ENCODE measurements at regions of chr4 and their contacts with region 1.

Region 1: GRCh38 chr4:16082426-16083240 is 1.2 kb downstream of the PROM1 start:
- DNase-seq: peak; percentile 70 to 88
- H3K4me3 ChIP-seq: peak overlapping the region; percentile 62 to 94 (median 81)
- H3K27ac ChIP-seq: peak overlapping the region; percentile 48; the same call in 1 of the 2 replicates
- H3K4me1 ChIP-seq: peaks cover 0 to 9% (median 6%) of the 10 kb centered on the region in 4 experiments; a peak in 3 of 7 replicates
- H3K27me3 ChIP-seq: peaks cover 0 to 10% (median 5%) of the 10 kb centered on the region in 4 experiments; a peak in 5 of 7 replicates
- CTCF ChIP-seq: no peak
- EP300 ChIP-seq: peak in 1 of 2 experiments; percentile 11; a peak in 1 of 3 replicates
- POLR2A ChIP-seq: peak; percentile 65 to 92
- RAD21 ChIP-seq: peak in 1 of 2 experiments; percentile 14; a peak in 1 of 4 replicates

Region 2: GRCh38 chr4:16026160-16026761 is 56.4 kb before region 1 on chr4:
- CTCF ChIA-PET with region 1: interaction called, 5 read pairs
- POLR2A ChIA-PET with region 1: interaction called, 12 read pairs
- DNase-seq: no peak
- H3K4me3 ChIP-seq: no peak overlapping the region
- H3K27ac ChIP-seq: no peak overlapping the region
- H3K4me1 ChIP-seq: peaks cover 0 to 5% (median 3%) of the 10 kb centered on the region in 4 experiments; a peak in 4 of 7 replicates
- H3K27me3 ChIP-seq: no peaks in the 10 kb centered on the region
- CTCF ChIP-seq: peak in 2 of 3 experiments; percentile 70 to 71; a peak in 3 of 4 replicates
- EP300 ChIP-seq: no peak
- POLR2A ChIP-seq: no peak
- RAD21 ChIP-seq: peak; percentile 88 to 90

Region 3: GRCh38 chr4:16043642-16044498 is 38.8 kb before region 1 on chr4:
- CTCF ChIA-PET with region 1: interaction called, 3 read pairs
- POLR2A ChIA-PET with region 1: interaction called, 17 read pairs
- DNase-seq: no peak
- H3K4me3 ChIP-seq: no peak overlapping the region
- H3K27ac ChIP-seq: no peak overlapping the region
- H3K4me1 ChIP-seq: peaks cover 4 to 7% (median 4%) of the 10 kb centered on the region in 4 experiments; a peak in 5 of 7 replicates
- H3K27me3 ChIP-seq: no peaks in the 10 kb centered on the region
- CTCF ChIP-seq: no peak
- EP300 ChIP-seq: no peak
- POLR2A ChIP-seq: no peak
- RAD21 ChIP-seq: no peak

Region 4: GRCh38 chr4:16056681-16057385 is 25.8 kb before region 1 on chr4:
- CTCF ChIA-PET with region 1: interaction called, 4 read pairs
- POLR2A ChIA-PET with region 1: interaction called, 16 read pairs
- DNase-seq: no peak
- H3K4me3 ChIP-seq: no peak overlapping the region
- H3K27ac ChIP-seq: no peak overlapping the region
- H3K4me1 ChIP-seq: peaks cover 0 to 3% (median 2%) of the 10 kb centered on the region in 4 experiments; a peak in 2 of 7 replicates
- H3K27me3 ChIP-seq: no peaks in the 10 kb centered on the region
- CTCF ChIP-seq: no peak
- EP300 ChIP-seq: no peak
- POLR2A ChIP-seq: no peak
- RAD21 ChIP-seq: no peak

Region 5: DNA sequence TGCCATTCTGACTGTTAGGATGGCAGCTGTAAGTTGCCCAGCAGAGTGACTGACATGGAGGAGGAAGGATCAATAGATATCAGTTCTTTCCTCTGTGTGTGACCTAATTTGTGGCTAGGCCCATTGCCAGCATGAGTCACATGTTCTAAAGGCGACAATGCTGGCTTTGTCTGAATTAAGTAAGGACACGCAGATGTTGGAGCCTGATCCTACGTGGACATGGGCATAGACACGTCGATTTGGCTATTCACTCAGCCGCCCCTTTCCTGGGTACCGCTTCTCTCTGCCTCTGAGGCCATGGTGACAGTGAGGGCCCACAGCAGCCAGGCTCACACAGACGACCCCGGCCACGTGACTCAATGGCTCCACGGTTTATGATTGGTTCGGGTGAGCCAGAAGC is 15.1 kb before region 1 on chr4:
- CTCF ChIA-PET with region 1: interaction called, 7 read pairs
- POLR2A ChIA-PET with region 1: interaction called, 87 read pairs
- DNase-seq: no peak
- H3K4me3 ChIP-seq: no peak overlapping the region
- H3K27ac ChIP-seq: no peak overlapping the region
- H3K4me1 ChIP-seq: peaks cover 0 to 6% (median 2%) of the 10 kb centered on the region in 4 experiments; a peak in 4 of 7 replicates
- H3K27me3 ChIP-seq: no peaks in the 10 kb centered on the region
- CTCF ChIP-seq: no peak
- EP300 ChIP-seq: no peak
- POLR2A ChIP-seq: no peak
- RAD21 ChIP-seq: no peak

Measured in H1 (cell line).